Naive thymus-derived CD4-positive, alpha-beta T cell (primary cell): ENCODE measurements at regions of chr4 and their contacts with region 1.

Region 1: DNA sequence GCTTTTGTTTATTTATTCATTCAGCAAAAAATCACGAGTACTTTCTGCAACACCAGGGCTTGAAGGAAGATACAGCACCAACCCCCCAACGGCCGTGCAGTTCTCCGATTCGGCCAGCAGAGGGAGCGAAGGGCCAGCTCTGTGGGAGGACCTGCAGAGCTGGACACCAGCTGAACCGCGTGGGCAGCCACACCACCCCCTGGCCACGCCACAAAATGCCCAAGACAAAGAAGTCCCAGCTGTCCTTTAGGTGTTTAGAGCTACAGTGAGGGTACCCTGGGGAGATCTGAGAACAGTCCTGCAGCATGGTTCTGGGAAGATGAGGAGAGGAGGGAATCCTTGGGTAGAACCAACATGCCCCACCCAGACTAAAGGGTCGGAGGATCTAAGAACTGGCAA is 83.1 kb downstream of the RELL1 start:
- DNase-seq: peak; percentile 38 to 84 (median 64)
- ATAC-seq: peak; percentile 87
- H3K4me3 ChIP-seq: no peak overlapping the region
- H3K4me3 Mint-ChIP-seq: peak overlapping the region in 2 of 10 donors; percentile 3 to 58
- H3K27ac ChIP-seq: no peak overlapping the region
- H3K27ac Mint-ChIP-seq: peak overlapping the region in 5 of 9 donors; percentile 2 to 70 (median 55)
- H3K4me1 ChIP-seq: peaks cover 0 to 3% of the 10 kb centered on the region in 2 donors
- H3K4me1 Mint-ChIP-seq: peaks cover 6 to 33% (median 11%) of the 10 kb centered on the region in 7 donors
- H3K27me3 ChIP-seq: no peaks in the 10 kb centered on the region
- H3K27me3 Mint-ChIP-seq: no peaks in the 10 kb centered on the region

Region 2: DNA sequence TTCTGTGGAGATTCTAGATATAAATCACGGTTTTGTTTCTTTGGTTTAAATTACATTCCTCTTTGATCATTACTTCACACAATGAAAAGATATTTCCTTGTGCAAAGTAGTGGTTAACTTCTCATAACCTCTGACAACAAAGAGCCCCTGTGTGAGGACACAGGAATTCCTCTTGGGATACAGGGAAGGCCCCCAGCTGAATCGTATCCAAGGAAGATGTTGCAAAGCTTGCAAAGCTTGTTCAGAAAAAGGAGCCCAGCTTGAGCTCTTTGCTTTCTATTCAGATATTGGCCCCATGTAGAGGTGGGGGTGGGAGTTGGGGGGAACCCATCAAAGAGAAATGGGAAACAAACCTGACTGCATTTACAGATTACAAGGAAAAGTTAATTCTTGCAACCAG is 62.6 kb before region 1 on chr4:
- CTCF ChIA-PET with region 1: no interaction called
- POLR2A ChIA-PET with region 1: no interaction called
- intact Hi-C with region 1: no loop called
- DNase-seq: no peak
- ATAC-seq: no peak
- H3K4me3 ChIP-seq: no peak overlapping the region
- H3K4me3 Mint-ChIP-seq: no peak overlapping the region
- H3K27ac ChIP-seq: no peak overlapping the region
- H3K27ac Mint-ChIP-seq: no peak overlapping the region
- H3K4me1 ChIP-seq: no peaks in the 10 kb centered on the region
- H3K4me1 Mint-ChIP-seq: peaks cover 0 to 5% (median 0%) of the 10 kb centered on the region in 7 donors
- H3K27me3 ChIP-seq: no peaks in the 10 kb centered on the region
- H3K27me3 Mint-ChIP-seq: peaks cover 0 to 12% (median 2%) of the 10 kb centered on the region in 5 donors

Region 3: GRCh38 chr4:37780444-37781150 is 177.5 kb after region 1 on chr4:
- CTCF ChIA-PET with region 1: interaction called, 47 read pairs
- POLR2A ChIA-PET with region 1: interaction called, 3 read pairs
- intact Hi-C with region 1: loop called (anchors 1 kb)
- DNase-seq: peak; percentile 20 to 90 (median 83)
- ATAC-seq: peak; percentile 96
- H3K4me3 ChIP-seq: peak overlapping the region; percentile 25
- H3K4me3 Mint-ChIP-seq: peak overlapping the region; percentile 19 to 84 (median 62)
- H3K27ac ChIP-seq: peak overlapping the region; percentile 59
- H3K27ac Mint-ChIP-seq: peak overlapping the region; percentile 32 to 96 (median 92)
- H3K4me1 ChIP-seq: peaks cover 12 to 27% of the 10 kb centered on the region in 2 donors
- H3K4me1 Mint-ChIP-seq: peaks cover 11 to 45% (median 28%) of the 10 kb centered on the region in 7 donors
- H3K27me3 ChIP-seq: no peaks in the 10 kb centered on the region
- H3K27me3 Mint-ChIP-seq: peaks cover 0 to 3% (median 0%) of the 10 kb centered on the region in 5 donors

Region 4: GRCh38 chr4:37793562-37793961 is 190.5 kb after region 1 on chr4:
- CTCF ChIA-PET with region 1: interaction called, 11 read pairs
- POLR2A ChIA-PET with region 1: no interaction called
- intact Hi-C with region 1: loop called in 1 of 2 experiments (anchors 1 kb)
- DNase-seq: peak in 5 of 9 donors; percentile 33 to 44 (median 39)
- ATAC-seq: peak; percentile 80
- H3K4me3 ChIP-seq: no peak overlapping the region
- H3K4me3 Mint-ChIP-seq: no peak overlapping the region
- H3K27ac ChIP-seq: no peak overlapping the region
- H3K27ac Mint-ChIP-seq: peak overlapping the region in 1 of 9 donors; percentile 49
- H3K4me1 ChIP-seq: no peaks in the 10 kb centered on the region
- H3K4me1 Mint-ChIP-seq: peaks cover 0 to 3% (median under 1%) of the 10 kb centered on the region in 7 donors
- H3K27me3 ChIP-seq: no peaks in the 10 kb centered on the region
- H3K27me3 Mint-ChIP-seq: peaks cover 0 to 22% (median 0%) of the 10 kb centered on the region in 5 donors

Region 5: DNA sequence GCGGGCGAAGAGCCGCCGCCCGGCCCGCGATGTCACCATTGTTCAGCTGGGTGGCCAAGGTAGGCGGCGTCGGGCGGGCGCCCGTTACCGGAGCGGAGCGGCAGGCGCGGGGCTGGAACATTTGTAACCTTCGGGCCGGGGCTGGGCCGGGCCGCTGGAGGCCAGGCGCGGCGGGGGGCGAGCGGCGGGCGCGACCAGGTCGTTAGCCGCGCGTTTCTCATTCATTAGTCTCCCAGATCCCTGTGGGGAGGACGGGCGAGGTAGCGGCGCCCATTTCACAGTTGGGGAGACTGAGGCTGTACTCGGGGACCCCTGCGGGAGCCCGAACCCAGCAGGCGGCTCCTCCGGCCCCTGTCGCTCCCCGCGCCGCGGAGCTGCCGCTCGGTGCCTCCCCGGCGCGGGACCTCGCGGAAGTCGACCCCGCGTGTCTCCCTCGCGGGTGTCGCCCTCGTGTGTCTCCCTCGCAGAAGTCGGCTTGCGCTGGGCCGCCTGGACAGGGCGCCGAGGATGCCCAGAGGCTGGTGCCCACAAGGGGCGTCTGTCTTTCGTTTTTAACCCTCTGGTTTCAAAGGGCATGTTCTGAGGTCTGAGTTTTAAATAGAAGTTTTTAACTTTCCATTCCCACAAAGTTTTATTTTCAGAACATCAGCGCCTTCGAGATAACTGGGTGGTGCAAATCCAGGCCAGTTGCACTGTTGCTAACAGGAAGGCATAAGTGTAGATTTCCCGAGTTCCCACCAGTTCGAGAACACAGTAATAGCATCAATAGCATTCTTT is 374.6 kb after region 1 on chr4:
- CTCF ChIA-PET with region 1: interaction called, 4 read pairs
- POLR2A ChIA-PET with region 1: no interaction called
- intact Hi-C with region 1: loop called (anchors 1 to 5 kb)
- DNase-seq: peak; percentile 56 to 75 (median 70)
- ATAC-seq: peak; percentile 87
- H3K4me3 ChIP-seq: peak overlapping the region; percentile 69
- H3K4me3 Mint-ChIP-seq: peak overlapping the region; percentile 74 to 91 (median 84)
- H3K27ac ChIP-seq: peak overlapping the region; percentile 85
- H3K27ac Mint-ChIP-seq: peak overlapping the region; percentile 51 to 90 (median 78)
- H3K4me1 ChIP-seq: peaks cover 9 to 13% of the 10 kb centered on the region in 2 donors
- H3K4me1 Mint-ChIP-seq: peaks cover 14 to 40% (median 34%) of the 10 kb centered on the region in 7 donors
- H3K27me3 ChIP-seq: no peaks in the 10 kb centered on the region
- H3K27me3 Mint-ChIP-seq: no peaks in the 10 kb centered on the region

Region 6: GRCh38 chr4:38034986-38035882 is 432.2 kb after region 1 on chr4:
- CTCF ChIA-PET with region 1: interaction called, 8 read pairs
- POLR2A ChIA-PET with region 1: no interaction called
- intact Hi-C with region 1: loop called (anchors 1 to 2 kb)
- DNase-seq: peak in 7 of 9 donors; percentile 29 to 66 (median 53)
- ATAC-seq: peak; percentile 68
- H3K4me3 ChIP-seq: no peak overlapping the region
- H3K4me3 Mint-ChIP-seq: no peak overlapping the region
- H3K27ac ChIP-seq: no peak overlapping the region
- H3K27ac Mint-ChIP-seq: no peak overlapping the region
- H3K4me1 ChIP-seq: no peaks in the 10 kb centered on the region
- H3K4me1 Mint-ChIP-seq: peaks cover 0 to 6% (median 0%) of the 10 kb centered on the region in 7 donors
- H3K27me3 ChIP-seq: no peaks in the 10 kb centered on the region
- H3K27me3 Mint-ChIP-seq: no peaks in the 10 kb centered on the region